Left cardiac atrium (tissue), 4 donors: ENCODE measurements at regions of chr6 and their contacts with region 1.

Region 1: DNA sequence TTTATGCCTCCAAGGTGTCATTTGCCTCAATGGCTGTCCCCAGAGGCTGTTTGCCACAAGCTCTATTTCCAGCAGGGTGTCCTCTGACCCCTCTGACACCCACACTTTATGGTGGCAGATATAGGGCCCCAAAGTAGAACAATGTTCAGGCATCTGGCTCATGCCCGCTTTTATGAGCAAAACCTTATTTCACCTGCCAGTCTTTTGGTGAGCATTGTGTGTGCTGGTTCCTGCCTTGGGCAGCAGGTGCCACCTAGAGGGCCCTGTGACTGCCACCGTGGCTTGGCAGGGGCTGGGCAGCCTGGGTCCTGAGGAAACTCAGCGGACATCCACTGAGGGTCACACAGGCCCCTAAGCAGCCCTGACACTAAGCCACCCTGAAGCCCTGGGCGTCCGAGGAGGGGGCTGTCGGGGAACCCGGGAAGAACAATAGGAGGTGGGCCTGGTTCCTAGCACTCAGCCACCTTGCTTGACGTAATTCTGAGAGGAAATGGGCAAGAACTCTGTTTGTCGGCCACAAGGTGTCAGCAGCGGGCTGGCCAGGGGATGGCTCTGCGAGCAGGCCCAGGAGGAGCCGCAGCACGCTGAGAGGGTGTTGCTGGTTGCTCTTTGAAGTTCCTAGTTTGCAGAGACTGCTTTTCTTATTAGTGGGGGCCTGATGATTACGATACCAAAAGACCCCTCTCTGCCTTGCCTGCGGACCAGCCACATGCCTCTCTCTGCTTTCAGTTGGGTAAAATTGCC is 148.9 kb downstream of the SCML4 start:
- DNase-seq: peak; percentile 81
- ATAC-seq: peak; percentile 89 to 92

Region 2: GRCh38 chr6:107318100-107318736 is 356.9 kb before region 1 on chr6:
- intact Hi-C with region 1: loop called in 1 of 2 experiments (anchors 5 kb)
- DNase-seq: peak; percentile 50
- ATAC-seq: peak; percentile 79 to 87

Region 3: GRCh38 chr6:107847844-107848802 is 173.0 kb after region 1 on chr6:
- intact Hi-C with region 1: loop called (anchors 2 to 5 kb)
- DNase-seq: peak; percentile 88
- ATAC-seq: peak; percentile 96 to 97